ENCODE measurements at regions of chr21 and their contacts with region 1.

Region 1: DNA sequence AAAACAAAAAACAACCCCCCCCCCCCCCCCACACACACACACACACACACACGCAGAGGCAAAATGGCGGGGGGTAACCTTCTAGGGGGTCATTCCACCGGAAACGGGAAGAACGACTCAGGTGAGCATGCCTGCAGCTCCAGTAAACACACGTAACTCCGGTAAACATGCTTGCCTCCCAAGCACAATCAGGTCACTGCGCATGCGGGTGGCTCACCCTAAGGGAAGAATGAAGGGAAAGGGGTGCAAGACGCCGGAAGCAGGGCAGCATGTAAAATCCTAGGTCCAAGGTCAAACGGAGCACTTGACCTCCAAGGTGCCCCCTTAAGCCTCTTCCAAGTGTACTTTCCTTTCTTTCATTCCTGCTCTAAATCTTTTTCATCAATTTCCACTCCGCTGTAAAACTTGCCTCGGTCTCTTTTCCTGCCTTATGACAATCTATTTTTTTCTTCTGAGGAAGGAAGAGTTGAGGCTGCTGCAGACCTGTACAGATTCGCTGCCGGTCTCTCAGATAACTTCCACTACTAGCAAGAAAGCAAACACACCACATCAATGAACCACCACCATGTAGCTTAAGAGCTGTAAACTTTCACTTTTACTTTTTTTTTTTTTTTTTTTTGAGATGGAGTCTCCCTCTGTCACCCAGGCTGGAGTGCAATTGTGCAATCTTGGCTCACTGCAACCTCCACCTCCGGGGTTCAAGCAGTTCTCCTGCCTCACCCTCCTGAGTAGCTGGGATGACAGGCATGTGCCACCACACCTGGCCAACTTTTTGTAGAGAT is 21.0 kb upstream of the CBR3 start:
- DNase-seq: no peak
- H3K4me3 ChIP-seq: peak overlapping the region; percentile 4 to 49 (median 40)
- H3K27ac ChIP-seq: peak overlapping the region; percentile 49 to 82 (median 78)
- H3K4me1 ChIP-seq: peaks cover 5 to 50% (median 22%) of the 10 kb centered on the region in 3 donors
- H3K27me3 ChIP-seq: no peaks in the 10 kb centered on the region
- CTCF ChIP-seq: no peak
- POLR2A ChIP-seq: no peak

Region 2: GRCh38 chr21:35690436-35690835 is 423.4 kb before region 1 on chr21:
- intact Hi-C with region 1: no loop called
- DNase-seq: no peak
- H3K4me3 ChIP-seq: no peak overlapping the region
- H3K27ac ChIP-seq: no peak overlapping the region
- H3K4me1 ChIP-seq: no peaks in the 10 kb centered on the region
- H3K27me3 ChIP-seq: peaks cover 0 to 40% (median 0%) of the 10 kb centered on the region in 4 donors
- CTCF ChIP-seq: no peak
- POLR2A ChIP-seq: no peak

Region 3: GRCh38 chr21:36059823-36060158 is 54.0 kb before region 1 on chr21:
- intact Hi-C with region 1: loop called (anchors 10 kb)
- DNase-seq: peak; percentile 27
- H3K4me3 ChIP-seq: peak overlapping the region; percentile 62 to 98 (median 80)
- H3K27ac ChIP-seq: peak overlapping the region; percentile 93 to 97 (median 94)
- H3K4me1 ChIP-seq: peaks cover 10 to 37% (median 12%) of the 10 kb centered on the region in 3 donors
- H3K27me3 ChIP-seq: no peaks in the 10 kb centered on the region
- CTCF ChIP-seq: no peak
- POLR2A ChIP-seq: no peak

Measured in esophagus squamous epithelium (tissue), 5 donors.